Colonic mucosa (tissue), 4 donors: ENCODE measurements at regions of chr4 and their contacts with region 1.

Region 1: GRCh38 chr4:169485791-169486742 is 126.3 kb downstream of the NEK1 start:
- DNase-seq: peak; percentile 52
- H3K4me3 ChIP-seq: no peak overlapping the region
- H3K27ac ChIP-seq: no peak overlapping the region
- H3K4me1 ChIP-seq: no peaks in the 10 kb centered on the region
- H3K27me3 ChIP-seq: no peaks in the 10 kb centered on the region
- CTCF ChIP-seq: peak; percentile 40

Region 2: GRCh38 chr4:168923526-168924194 is 562.4 kb before region 1 on chr4:
- intact Hi-C with region 1: loop called (anchors 5 kb)
- DNase-seq: peak; percentile 73
- H3K4me3 ChIP-seq: no peak overlapping the region
- H3K27ac ChIP-seq: no peak overlapping the region
- H3K4me1 ChIP-seq: no peaks in the 10 kb centered on the region
- H3K27me3 ChIP-seq: no peaks in the 10 kb centered on the region
- CTCF ChIP-seq: peak; percentile 57

Region 3: DNA sequence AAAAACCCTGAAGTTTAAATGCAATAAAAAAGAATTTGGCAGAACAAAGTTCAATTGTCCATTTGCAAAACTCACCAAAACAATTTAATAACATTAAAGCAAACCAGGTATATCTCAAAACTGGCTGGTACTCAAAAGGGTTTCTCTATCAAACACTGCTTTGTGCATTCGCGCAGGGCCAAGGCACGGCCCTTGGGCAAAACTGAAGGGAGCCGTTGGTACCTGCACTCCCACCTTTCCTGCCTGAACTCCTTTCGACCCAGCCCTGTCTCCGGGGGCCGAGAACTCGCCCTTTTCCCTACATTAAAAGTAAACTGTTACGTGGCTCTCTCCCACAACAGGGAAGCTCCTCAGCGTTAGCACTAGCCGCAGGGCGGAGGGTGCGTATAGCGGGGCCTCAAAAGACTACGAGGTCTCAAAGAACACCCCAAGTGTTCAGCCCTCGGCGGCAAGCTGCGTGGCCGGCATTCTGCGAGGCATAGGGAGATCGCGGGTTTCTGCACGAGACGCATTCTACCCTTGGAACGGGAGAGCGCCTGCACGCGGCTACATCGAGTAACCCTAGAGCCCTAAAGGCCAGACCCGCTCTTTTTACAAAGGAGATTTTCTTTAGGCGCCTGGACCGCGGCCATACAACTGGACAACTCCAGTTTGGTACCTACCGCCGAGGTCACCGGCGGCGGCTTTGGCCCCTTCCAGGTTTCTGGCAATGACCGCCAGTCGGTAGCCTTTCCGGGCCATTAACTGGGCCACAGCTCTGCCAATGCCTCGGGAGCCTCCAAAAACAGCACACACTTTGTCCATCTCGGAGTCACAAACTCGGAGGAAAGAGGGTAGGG is 476.6 kb before region 1 on chr4:
- intact Hi-C with region 1: loop called (anchors 5 kb)
- DNase-seq: peak; percentile 71
- H3K4me3 ChIP-seq: peak overlapping the region; percentile 52
- H3K27ac ChIP-seq: peak overlapping the region; percentile 96
- H3K4me1 ChIP-seq: no peaks in the 10 kb centered on the region
- H3K27me3 ChIP-seq: no peaks in the 10 kb centered on the region
- CTCF ChIP-seq: no peak

Region 4: DNA sequence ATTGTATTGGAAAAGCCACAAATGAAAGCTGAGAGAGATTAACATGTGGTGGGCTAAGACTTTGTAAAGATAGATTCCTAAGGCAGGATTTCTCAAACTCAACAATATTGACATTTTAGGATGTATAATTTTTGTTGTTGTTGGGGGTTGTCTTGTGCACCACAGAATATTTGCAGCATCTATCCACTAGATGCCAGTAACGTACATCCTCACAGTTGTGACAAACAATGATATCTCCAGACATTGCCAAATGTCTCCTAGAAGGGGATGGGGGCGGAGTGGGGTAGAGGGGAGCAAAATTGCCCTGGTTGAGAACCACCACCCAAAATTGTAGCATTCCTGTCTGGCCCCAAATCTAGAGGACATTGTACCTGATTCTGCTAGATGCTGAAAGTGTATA is 461.3 kb before region 1 on chr4:
- intact Hi-C with region 1: loop called (anchors 5 kb)
- DNase-seq: no peak
- H3K4me3 ChIP-seq: no peak overlapping the region
- H3K27ac ChIP-seq: no peak overlapping the region
- H3K4me1 ChIP-seq: no peaks in the 10 kb centered on the region
- H3K27me3 ChIP-seq: no peaks in the 10 kb centered on the region
- CTCF ChIP-seq: peak; percentile 51

Region 5: GRCh38 chr4:169270810-169271691 is 215.0 kb before region 1 on chr4 and contains the start of gene SH3RF1:
- intact Hi-C with region 1: loop called (anchors 5 kb)
- DNase-seq: peak; percentile 89
- H3K4me3 ChIP-seq: peak within 1 kb of the TSS; percentile 91
- H3K27ac ChIP-seq: peak within 1 kb of the TSS; percentile 93
- H3K4me1 ChIP-seq: no peaks in the 10 kb centered on the region
- H3K27me3 ChIP-seq: no peaks in the 10 kb centered on the region
- CTCF ChIP-seq: peak; percentile 8
- total RNA-seq, gene SH3RF1: 50.2 to 77.1 TPM